ENCODE measurements at regions of chr20 and their contacts with region 1.

Region 1: GRCh38 chr20:58236612-58237330 is 8.3 kb upstream of the ANKRD60 start:
- DNase-seq: peak; percentile 43 to 81
- ATAC-seq: peak; percentile 90

Region 2: GRCh38 chr20:58447511-58448391 is 211.0 kb after region 1 on chr20:
- intact Hi-C with region 1: loop called in 1 of 2 experiments (anchors 10 kb)
- DNase-seq: peak in 1 of 2 donors; percentile 64
- ATAC-seq: peak; percentile 84

Region 3: DNA sequence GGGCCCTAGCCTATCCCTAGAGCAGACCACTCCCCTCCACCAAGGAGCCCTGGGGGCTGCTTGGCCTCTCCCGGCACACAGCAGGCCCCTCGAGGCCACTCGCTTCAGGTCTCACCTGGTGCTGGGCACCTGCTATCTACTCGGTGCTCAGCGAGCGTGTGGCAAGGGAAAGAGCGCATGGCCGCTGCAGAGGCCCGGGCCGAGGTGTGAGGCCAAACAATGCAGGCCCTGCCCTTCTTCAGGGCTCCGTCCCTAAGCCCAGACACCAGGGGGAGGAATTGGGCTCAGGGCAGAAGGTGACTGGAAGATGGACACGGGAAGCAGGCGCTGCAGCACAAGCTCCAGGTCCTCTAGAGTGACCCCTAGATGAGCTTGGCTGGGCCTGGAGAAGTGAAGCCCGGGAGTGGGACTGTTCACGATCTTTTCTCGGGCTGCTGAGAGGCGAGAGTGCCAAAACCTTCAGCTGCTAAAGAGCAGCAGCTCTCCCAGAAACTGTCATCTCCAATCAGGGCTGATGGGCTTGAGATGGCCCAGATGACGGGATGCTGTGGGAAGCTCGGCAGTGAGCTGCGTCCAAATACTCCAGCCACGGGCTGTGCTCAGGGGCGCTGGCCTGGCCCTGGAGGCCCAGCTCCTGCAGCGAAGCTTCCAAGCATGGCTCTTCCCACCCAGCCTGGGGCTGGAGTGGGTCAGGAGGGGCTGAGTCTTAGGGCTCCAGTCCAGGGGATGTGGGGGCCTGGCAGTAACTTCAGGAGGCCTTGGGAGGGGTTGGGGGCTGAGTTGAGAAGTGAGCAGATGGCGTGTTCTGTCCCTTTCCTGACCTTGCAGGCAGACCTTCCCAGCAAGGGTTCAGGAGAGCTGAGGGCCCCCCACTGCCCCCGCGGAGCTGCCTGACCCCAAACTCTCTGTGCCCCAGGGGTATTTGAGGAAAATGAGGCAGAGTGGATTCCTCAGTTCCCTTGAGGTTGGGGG is 234.7 kb after region 1 on chr20:
- intact Hi-C with region 1: no loop called
- DNase-seq: peak; percentile 33 to 52
- ATAC-seq: peak; percentile 15

Region 4: DNA sequence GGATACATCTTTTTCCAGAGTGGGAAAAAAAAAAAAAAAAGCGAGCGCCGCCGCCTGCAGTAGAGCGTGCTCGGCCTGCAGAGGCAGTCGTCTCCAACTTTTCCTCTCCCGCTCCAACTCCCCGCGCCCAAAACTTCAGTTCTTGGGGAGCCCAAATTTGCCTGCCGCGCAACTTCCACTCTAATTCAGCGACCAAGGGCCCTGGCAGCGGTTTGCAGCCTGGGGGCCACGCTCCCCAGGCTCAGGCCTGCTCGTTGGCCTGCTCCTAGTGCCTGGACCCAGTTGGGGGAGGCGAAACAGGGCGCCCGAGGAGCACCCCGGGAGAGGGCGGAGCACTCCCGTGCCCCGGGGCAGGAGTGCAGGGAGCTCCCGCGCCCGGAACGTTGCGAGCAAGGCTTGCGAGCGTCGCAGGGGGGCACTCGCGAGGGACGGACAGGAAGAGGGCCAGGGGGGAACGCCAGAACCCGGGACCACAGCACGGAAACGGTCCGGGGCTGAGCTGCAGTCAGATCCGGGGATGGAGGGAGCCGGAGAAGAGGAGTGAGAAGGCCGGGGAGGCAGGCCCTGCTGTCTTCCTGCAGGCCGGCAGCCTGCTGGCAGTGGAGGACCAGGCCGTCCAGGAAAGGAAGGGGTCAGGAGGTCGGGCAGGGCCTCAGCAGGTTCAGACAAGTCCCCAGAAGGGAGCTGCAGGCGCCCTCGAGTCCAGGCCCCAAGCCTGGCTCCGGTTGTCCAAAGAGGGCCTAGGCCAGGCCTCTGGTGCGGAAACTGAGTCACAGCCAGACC is 414.2 kb after region 1 on chr20 and contains the start of gene STX16:
- intact Hi-C with region 1: loop called in 1 of 2 experiments (anchors 10 kb)
- DNase-seq: peak; percentile 91 to 92
- ATAC-seq: peak; percentile 89
- total RNA-seq, gene STX16: 39.6 to 40.7 TPM

Measured in left colon (tissue), 2 donors.